OCI-LY7 (cell line): ENCODE measurements at regions of chr4 and their contacts with region 1.

Region 1: GRCh38 chr4:82331814-82332213 is 42.0 kb downstream of the HNRNPD start:
- DNase-seq: no peak
- H3K4me3 ChIP-seq: no peak overlapping the region
- H3K27ac ChIP-seq: no peak overlapping the region
- H3K4me1 ChIP-seq: no peaks in the 10 kb centered on the region
- CTCF ChIP-seq: no peak

Region 2: GRCh38 chr4:82346126-82346525 is 14.3 kb after region 1 on chr4:
- CTCF ChIA-PET with region 1: no interaction called
- POLR2A ChIA-PET with region 1: interaction called, 11 read pairs
- intact Hi-C with region 1: no loop called
- DNase-seq: no peak
- H3K4me3 ChIP-seq: no peak overlapping the region
- H3K27ac ChIP-seq: no peak overlapping the region
- H3K4me1 ChIP-seq: no peaks in the 10 kb centered on the region
- CTCF ChIP-seq: no peak